Activated naive CD4-positive, alpha-beta T cell treated with anti-CD3 and anti-CD28 coated beads for 36 hours (primary cell): ENCODE measurements at regions of chr17 and their contacts with region 1.

Region 1: DNA sequence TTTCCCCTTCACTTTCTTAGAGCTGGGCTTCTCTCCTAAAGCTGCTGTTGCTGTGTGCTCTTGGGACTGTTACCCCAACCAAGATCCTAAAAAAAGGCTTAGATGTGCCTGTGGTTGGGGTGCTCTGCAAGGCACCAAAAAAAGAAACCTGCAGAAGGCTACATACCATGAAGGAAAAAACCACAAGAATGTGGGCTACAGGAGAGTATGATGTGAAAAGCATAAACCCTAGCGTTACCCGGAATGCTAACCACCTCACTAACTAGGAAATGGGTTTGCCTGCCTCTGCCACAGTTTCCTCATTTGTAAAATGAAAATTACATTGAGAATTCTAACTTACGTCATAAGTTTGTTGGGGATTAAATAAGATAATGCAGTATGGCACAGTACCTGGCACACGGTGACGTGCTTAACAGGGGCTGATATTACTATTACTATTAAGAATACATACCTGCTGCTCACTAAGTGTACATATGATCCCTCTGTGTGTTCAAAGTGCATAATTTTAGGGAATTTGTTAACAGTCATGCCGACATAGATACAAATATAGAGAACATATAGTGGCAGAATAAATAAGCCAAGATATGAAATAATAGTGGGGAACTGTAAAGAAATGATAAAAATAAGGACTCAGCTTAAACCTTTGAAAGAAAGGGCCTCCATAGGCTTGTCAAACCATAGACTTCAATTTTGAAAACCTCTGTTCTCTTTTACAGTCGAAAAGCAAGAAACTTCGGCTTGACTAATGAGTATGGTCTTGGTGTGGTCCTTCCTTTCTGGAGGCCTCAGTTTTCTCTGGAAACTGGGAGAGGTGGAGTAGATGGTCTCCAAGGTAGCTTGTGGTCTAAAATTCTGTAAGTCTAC is 177.8 kb upstream of the TBX2 start:
- DNase-seq: peak; percentile 59
- H3K4me3 Mint-ChIP-seq: peak overlapping the region; percentile 52
- H3K27ac Mint-ChIP-seq: peak overlapping the region; percentile 85
- H3K4me1 Mint-ChIP-seq: peaks cover 46% of the 10 kb centered on the region
- H3K27me3 Mint-ChIP-seq: no peaks in the 10 kb centered on the region

Region 2: DNA sequence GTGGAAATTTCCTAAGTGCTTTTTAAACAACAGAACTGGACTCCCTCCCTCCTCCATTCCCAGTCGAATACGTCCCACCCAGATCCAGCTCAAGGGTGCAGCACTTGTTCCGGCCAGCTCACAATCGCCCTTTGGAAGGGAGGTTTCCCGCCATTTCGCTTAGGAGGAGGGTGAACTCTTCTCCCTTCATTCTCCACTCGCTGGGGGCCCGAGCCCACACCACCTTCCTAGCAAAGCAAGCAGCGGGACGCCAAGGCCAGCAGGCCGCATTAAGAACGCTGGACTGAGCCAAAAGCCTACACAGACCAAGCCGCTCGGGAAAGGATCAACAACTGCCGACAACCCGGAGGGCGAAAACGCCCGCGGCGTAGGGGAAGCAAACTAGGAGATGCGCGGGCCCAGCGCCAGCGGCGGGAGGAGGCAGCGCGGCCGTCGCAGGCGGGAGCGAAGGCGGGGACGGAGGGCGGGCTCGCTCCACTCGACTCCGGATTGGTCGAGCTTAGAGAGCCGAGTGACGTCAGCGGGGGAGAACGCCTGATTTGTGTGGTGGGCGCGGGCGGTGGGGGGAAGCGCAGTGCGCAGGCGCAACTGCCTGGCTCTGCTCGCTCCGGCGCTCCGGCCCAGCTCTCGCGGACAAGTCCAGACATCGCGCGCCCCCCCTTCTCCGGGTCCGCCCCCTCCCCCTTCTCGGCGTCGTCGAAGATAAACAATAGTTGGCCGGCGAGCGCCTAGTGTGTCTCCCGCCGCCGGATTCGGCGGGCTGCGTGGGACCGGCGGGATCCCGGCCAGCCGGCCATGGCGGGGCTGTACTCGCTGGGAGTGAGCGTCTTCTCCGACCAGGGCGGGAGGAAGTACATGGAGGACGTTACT is 622.0 kb before region 1 on chr17 and contains the start of gene PPM1D:
- CTCF ChIA-PET with region 1: no interaction called
- intact Hi-C with region 1: loop called (anchors 10 kb)
- DNase-seq: peak; percentile 99
- H3K4me3 Mint-ChIP-seq: peak within 1 kb of the TSS; percentile 93
- H3K27ac Mint-ChIP-seq: peak within 1 kb of the TSS; percentile 95
- H3K4me1 Mint-ChIP-seq: peaks cover 30% of the 10 kb centered on the region
- H3K27me3 Mint-ChIP-seq: no peaks in the 10 kb centered on the region
- total RNA-seq, gene PPM1D: 11.8 to 13.1 TPM

Region 3: GRCh38 chr17:61139219-61139618 is 82.6 kb before region 1 on chr17:
- CTCF ChIA-PET with region 1: no interaction called
- intact Hi-C with region 1: loop called (anchors 1 kb)
- DNase-seq: peak; percentile 75
- H3K4me3 Mint-ChIP-seq: peak overlapping the region; percentile 34
- H3K27ac Mint-ChIP-seq: peak overlapping the region; percentile 37
- H3K4me1 Mint-ChIP-seq: peaks cover 19% of the 10 kb centered on the region
- H3K27me3 Mint-ChIP-seq: no peaks in the 10 kb centered on the region

Region 4: GRCh38 chr17:61239261-61239660 is 17.4 kb after region 1 on chr17:
- CTCF ChIA-PET with region 1: interaction called, 3 read pairs
- intact Hi-C with region 1: loop called (anchors 1 kb)
- DNase-seq: no peak
- H3K4me3 Mint-ChIP-seq: peak overlapping the region; percentile 18
- H3K27ac Mint-ChIP-seq: peak overlapping the region; percentile 36
- H3K4me1 Mint-ChIP-seq: peaks cover 21% of the 10 kb centered on the region
- H3K27me3 Mint-ChIP-seq: no peaks in the 10 kb centered on the region

Region 5: GRCh38 chr17:62065598-62066468 is 844.0 kb after region 1 on chr17:
- CTCF ChIA-PET with region 1: no interaction called
- intact Hi-C with region 1: loop called (anchors 10 kb)
- DNase-seq: peak; percentile 99
- H3K4me3 Mint-ChIP-seq: peak overlapping the region; percentile 95
- H3K27ac Mint-ChIP-seq: peak overlapping the region; percentile 98
- H3K4me1 Mint-ChIP-seq: peaks cover 28% of the 10 kb centered on the region
- H3K27me3 Mint-ChIP-seq: no peaks in the 10 kb centered on the region